Transverse colon (tissue), 4 donors: ENCODE measurements at regions of chr6 and their contacts with region 1.

Region 1: GRCh38 chr6:135506270-135506997 is 8.9 kb upstream of the AHI1 start:
- DNase-seq: no peak
- H3K4me3 ChIP-seq: no peak overlapping the region
- H3K27ac ChIP-seq: peak overlapping the region; percentile 62 to 74 (median 70)
- H3K4me1 ChIP-seq: peaks cover 0 to 26% (median 9%) of the 10 kb centered on the region in 4 donors
- H3K27me3 ChIP-seq: no peaks in the 10 kb centered on the region
- CTCF ChIP-seq: peak; percentile 50 to 69 (median 55)
- EP300 ChIP-seq: no peak
- POLR2A ChIP-seq: no peak

Region 2: GRCh38 chr6:135640449-135641111 is 134.1 kb after region 1 on chr6:
- in situ Hi-C with region 1: no loop called
- intact Hi-C with region 1: no loop called
- DNase-seq: no peak
- H3K4me3 ChIP-seq: no peak overlapping the region
- H3K27ac ChIP-seq: no peak overlapping the region
- H3K4me1 ChIP-seq: no peaks in the 10 kb centered on the region
- H3K27me3 ChIP-seq: no peaks in the 10 kb centered on the region
- CTCF ChIP-seq: no peak
- EP300 ChIP-seq: no peak
- POLR2A ChIP-seq: no peak

Region 3: GRCh38 chr6:136226027-136226673 is 719.7 kb after region 1 on chr6:
- in situ Hi-C with region 1: no loop called
- intact Hi-C with region 1: loop called (anchors 10 kb)
- DNase-seq: peak; percentile 60
- H3K4me3 ChIP-seq: peak overlapping the region in 2 of 4 donors; percentile 10 to 47
- H3K27ac ChIP-seq: peak overlapping the region; percentile 6 to 69 (median 49)
- H3K4me1 ChIP-seq: peaks cover 4 to 20% (median 9%) of the 10 kb centered on the region in 4 donors
- H3K27me3 ChIP-seq: no peaks in the 10 kb centered on the region
- CTCF ChIP-seq: peak; percentile 99 to 100 (median 100)
- EP300 ChIP-seq: no peak
- POLR2A ChIP-seq: no peak

Region 4: DNA sequence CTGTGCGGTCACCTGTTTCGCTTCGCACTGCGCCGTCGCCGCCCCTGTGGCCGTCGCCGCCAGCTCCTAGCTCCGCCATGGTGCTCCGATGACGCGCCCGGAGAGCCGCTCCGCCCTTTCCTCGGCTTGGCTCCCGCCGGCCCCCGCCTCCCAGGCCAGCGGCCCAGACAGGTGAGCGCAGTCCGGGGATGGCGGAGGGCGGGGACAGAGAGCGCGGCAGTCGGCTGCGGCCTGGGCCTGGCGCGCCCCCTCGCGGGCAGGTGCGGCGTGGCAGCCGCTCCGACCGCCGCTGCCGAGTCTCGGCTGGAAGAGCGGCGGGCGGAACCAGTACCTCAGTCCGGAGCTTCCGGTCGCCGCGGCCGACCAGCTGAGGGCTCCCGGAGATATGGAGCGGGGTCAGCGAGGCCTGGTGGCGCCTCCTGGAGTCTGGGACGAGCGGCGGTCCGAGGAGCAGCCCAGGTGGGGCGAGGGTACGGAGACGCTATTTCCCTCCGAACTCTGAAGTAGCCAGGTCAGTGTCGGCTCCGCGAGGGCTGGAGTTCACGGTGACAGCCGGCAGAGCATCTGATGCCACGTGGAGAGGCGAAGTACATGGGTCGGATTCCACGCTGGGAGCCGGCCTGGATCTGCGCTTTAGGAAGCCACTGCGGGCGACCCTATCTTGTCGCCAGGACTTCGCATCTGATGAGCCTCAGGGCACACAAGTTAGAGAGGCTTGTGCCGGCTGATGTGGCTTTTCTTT is 1044.1 kb after region 1 on chr6 and contains the start of gene MAP7:
- in situ Hi-C with region 1: loop called in 1 of 4 experiments (anchors 25 kb)
- intact Hi-C with region 1: no loop called
- DNase-seq: peak; percentile 91
- H3K4me3 ChIP-seq: peak within 1 kb of the TSS; percentile 58 to 69 (median 64)
- H3K27ac ChIP-seq: peak within 1 kb of the TSS; percentile 69 to 86 (median 83)
- H3K4me1 ChIP-seq: peaks cover 3 to 40% (median 6%) of the 10 kb centered on the region in 4 donors
- H3K27me3 ChIP-seq: peaks cover 2% of the 10 kb centered on the region
- CTCF ChIP-seq: peak; percentile 59 to 98 (median 89)
- EP300 ChIP-seq: no peak
- POLR2A ChIP-seq: peak; percentile 61
- total RNA-seq, gene MAP7: 40.6 to 61.3 (median 46.6) TPM